Activated naive CD4-positive, alpha-beta T cell treated with anti-CD3 and anti-CD28 coated beads, Interleukin-2, amount 10 ng/mL, durations not matched to agents 7 days and 5 days (primary cell): ENCODE measurements at regions of chr9 and their contacts with region 1.

Region 1: GRCh38 chr9:136122425-136123383 is 4.0 kb upstream of the TMEM250 start:
- DNase-seq: peak; percentile 84
- H3K4me3 Mint-ChIP-seq: no peak overlapping the region
- H3K27ac Mint-ChIP-seq: no peak overlapping the region
- H3K4me1 Mint-ChIP-seq: peaks cover 4% of the 10 kb centered on the region
- H3K27me3 Mint-ChIP-seq: peaks cover 23% of the 10 kb centered on the region

Region 2: DNA sequence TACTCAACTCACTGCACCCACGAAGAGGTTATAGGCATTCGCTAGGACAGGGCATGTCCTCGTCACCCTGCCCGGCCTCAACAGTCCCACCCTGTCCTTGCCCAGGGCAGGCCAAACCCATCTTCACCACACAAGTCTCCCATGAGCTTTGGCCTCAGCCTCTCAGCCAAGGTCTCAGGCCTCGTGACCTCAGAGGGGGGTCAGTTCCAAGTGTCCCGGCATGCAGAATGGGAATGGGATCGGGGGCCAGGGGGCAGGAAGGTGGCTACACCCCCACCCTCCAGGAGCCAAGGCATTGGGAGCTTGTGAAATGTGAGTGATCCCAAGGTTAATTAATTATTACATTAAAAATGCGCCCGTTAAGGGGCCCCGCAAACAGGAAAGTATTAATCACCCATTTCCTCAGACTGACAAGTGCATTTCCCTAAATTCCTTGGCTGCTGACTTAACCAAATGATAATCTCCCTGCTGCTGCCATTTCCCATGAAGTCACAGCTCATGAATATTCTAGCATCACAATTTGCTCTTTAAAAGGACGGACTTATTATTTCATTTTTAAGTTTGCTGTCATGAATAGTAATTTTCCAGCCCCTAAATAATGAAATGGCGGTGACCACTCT is 153.5 kb before region 1 on chr9:
- CTCF ChIA-PET with region 1: interaction called, 53 read pairs
- DNase-seq: no peak
- H3K4me3 Mint-ChIP-seq: no peak overlapping the region
- H3K27ac Mint-ChIP-seq: no peak overlapping the region
- H3K4me1 Mint-ChIP-seq: peaks cover 16% of the 10 kb centered on the region
- H3K27me3 Mint-ChIP-seq: peaks cover 47% of the 10 kb centered on the region

Region 3: DNA sequence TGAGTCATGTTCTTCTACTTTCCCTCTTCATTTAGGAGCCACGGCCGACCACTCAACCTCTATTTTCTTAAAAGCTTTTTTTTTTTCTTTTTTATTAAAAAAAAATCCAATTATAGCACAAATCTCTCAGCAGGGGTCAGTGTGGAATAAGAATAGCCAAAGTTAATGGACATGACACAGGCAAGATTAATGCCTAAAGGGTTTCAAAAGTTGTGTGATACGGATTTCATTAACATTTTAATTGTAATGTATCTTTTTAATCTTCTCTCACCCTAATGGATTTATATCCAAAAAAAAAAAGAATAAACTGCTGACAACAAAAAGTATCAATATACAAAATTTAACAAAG is 33.0 kb before region 1 on chr9:
- CTCF ChIA-PET with region 1: interaction called, 48 read pairs
- DNase-seq: no peak
- H3K4me3 Mint-ChIP-seq: no peak overlapping the region
- H3K27ac Mint-ChIP-seq: no peak overlapping the region
- H3K4me1 Mint-ChIP-seq: peaks cover 17% of the 10 kb centered on the region
- H3K27me3 Mint-ChIP-seq: peaks cover 34% of the 10 kb centered on the region

Region 4: GRCh38 chr9:136107155-136107952 is 15.3 kb before region 1 on chr9:
- CTCF ChIA-PET with region 1: interaction called, 14 read pairs
- DNase-seq: peak; percentile 81
- H3K4me3 Mint-ChIP-seq: peak overlapping the region; percentile 74
- H3K27ac Mint-ChIP-seq: peak overlapping the region; percentile 93
- H3K4me1 Mint-ChIP-seq: peaks cover 68% of the 10 kb centered on the region
- H3K27me3 Mint-ChIP-seq: peaks cover 10% of the 10 kb centered on the region